ENCODE measurements at regions of chr7 and their contacts with region 1.

Region 1: GRCh38 chr7:92447345-92448204 is at the start of gene GATAD1:
- DNase-seq: peak; percentile 63 to 90 (median 79)
- ATAC-seq: peak; percentile 70 to 74
- H3K4me3 Mint-ChIP-seq: peak within 1 kb of the TSS; percentile 88 to 98 (median 92)
- H3K27ac Mint-ChIP-seq: peak within 1 kb of the TSS; percentile 95 to 99 (median 98)
- H3K4me1 Mint-ChIP-seq: peaks cover 12 to 16% (median 15%) of the 10 kb centered on the region in 4 donors
- H3K27me3 Mint-ChIP-seq: no peaks in the 10 kb centered on the region
- polyA plus RNA-seq, gene GATAD1: 8.2 to 10.9 (median 9.3) TPM

Region 2: GRCh38 chr7:91940572-91941341 is 506.8 kb before region 1 on chr7 and contains the start of gene AKAP9:
- POLR2A ChIA-PET with region 1: interaction called, 12 read pairs
- DNase-seq: peak; percentile 77 to 92 (median 87)
- ATAC-seq: peak; percentile 87 to 89
- H3K4me3 Mint-ChIP-seq: peak within 1 kb of the TSS; percentile 91 to 100 (median 96)
- H3K27ac Mint-ChIP-seq: peak within 1 kb of the TSS; percentile 90 to 100 (median 98)
- H3K4me1 Mint-ChIP-seq: peaks cover 16 to 54% (median 44%) of the 10 kb centered on the region in 4 donors
- H3K27me3 Mint-ChIP-seq: no peaks in the 10 kb centered on the region
- polyA plus RNA-seq, gene AKAP9: 11.1 to 40.8 (median 20.4) TPM

Region 3: DNA sequence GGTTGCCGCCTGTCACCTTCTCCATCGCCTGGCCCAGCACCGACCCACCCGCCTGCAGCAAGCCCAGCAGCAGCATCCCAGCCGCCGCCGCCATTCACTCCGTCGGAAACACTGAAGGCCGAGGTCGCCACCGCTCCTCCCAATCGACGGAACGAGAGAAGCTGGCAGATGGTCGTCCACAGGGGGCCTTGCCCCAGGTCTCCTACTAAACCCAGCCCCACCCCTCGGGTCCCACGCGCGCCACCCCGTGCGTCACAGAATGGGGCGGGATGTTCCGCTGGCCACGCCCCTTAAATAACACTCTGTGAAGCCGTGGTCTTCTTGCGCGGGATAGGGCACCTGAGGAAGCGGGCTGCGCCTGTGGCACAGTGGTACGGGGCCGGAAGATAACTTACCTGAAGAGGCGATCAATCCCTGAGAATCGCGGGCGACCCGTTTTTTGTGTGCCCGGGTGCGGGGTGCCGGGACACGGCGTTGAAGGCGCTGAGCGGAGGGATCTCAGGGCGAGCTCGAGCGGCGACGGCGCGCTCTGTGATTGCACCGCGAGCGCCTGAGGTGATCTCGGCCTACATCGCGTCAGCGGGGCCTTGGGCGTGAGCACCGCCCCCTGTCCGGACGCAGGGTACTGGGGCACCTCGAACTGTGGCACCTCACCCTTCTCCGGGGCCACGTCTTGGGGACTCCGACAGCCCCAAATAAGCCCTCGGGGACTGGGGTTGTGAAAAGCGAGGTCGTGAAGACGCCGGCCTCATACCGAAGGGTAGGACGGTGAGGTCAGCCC is 313.1 kb before region 1 on chr7 and contains the start of gene CYP51A1:
- POLR2A ChIA-PET with region 1: interaction called, 11 read pairs
- DNase-seq: peak; percentile 86 to 99 (median 96)
- ATAC-seq: peak; percentile 83 to 84
- H3K4me3 Mint-ChIP-seq: peak within 1 kb of the TSS; percentile 93 to 100 (median 98)
- H3K27ac Mint-ChIP-seq: peak within 1 kb of the TSS; percentile 99 to 100 (median 99)
- H3K4me1 Mint-ChIP-seq: peaks cover 9 to 34% (median 31%) of the 10 kb centered on the region in 4 donors
- H3K27me3 Mint-ChIP-seq: peaks cover 0 to 2% (median 0%) of the 10 kb centered on the region in 5 donors
- polyA plus RNA-seq, gene CYP51A1: 9.4 to 11.9 (median 11.0) TPM

Region 4: GRCh38 chr7:92245487-92246362 is 201.8 kb before region 1 on chr7 and contains the starts of genes ANKIB1 and KRIT1:
- POLR2A ChIA-PET with region 1: interaction called, 27 read pairs
- DNase-seq: peak; percentile 77 to 94 (median 85)
- ATAC-seq: peak; percentile 81 to 85
- H3K4me3 Mint-ChIP-seq: peak within 1 kb of the TSS; percentile 93 to 99 (median 98)
- H3K27ac Mint-ChIP-seq: peak within 1 kb of the TSS; percentile 98 to 100 (median 99)
- H3K4me1 Mint-ChIP-seq: peaks cover 20 to 59% (median 45%) of the 10 kb centered on the region in 4 donors
- H3K27me3 Mint-ChIP-seq: no peaks in the 10 kb centered on the region
- polyA plus RNA-seq, gene ANKIB1: 5.1 to 12.7 (median 9.8) TPM
- polyA plus RNA-seq, gene KRIT1: 11.2 to 20.1 (median 17.6) TPM

Region 5: GRCh38 chr7:92282930-92283329 is 164.6 kb before region 1 on chr7:
- POLR2A ChIA-PET with region 1: no interaction called
- DNase-seq: no peak
- ATAC-seq: no peak
- H3K4me3 Mint-ChIP-seq: no peak overlapping the region
- H3K27ac Mint-ChIP-seq: no peak overlapping the region
- H3K4me1 Mint-ChIP-seq: peaks cover 12 to 30% (median 12%) of the 10 kb centered on the region in 4 donors
- H3K27me3 Mint-ChIP-seq: no peaks in the 10 kb centered on the region

Region 6: GRCh38 chr7:92425321-92425947 is 22.1 kb before region 1 on chr7:
- POLR2A ChIA-PET with region 1: interaction called, 51 read pairs
- DNase-seq: no peak
- ATAC-seq: peak in 1 of 2 donors; percentile 37
- H3K4me3 Mint-ChIP-seq: peak overlapping the region in 5 of 10 donors; percentile 48 to 55 (median 50)
- H3K27ac Mint-ChIP-seq: no peak overlapping the region
- H3K4me1 Mint-ChIP-seq: peaks cover 6 to 13% (median 9%) of the 10 kb centered on the region in 4 donors
- H3K27me3 Mint-ChIP-seq: peaks cover 12 to 27% (median 21%) of the 10 kb centered on the region in 5 donors

Region 7: GRCh38 chr7:92528188-92528957 is 80.8 kb after region 1 on chr7 and contains the starts of genes PEX1 and RBM48:
- POLR2A ChIA-PET with region 1: interaction called, 27 read pairs
- DNase-seq: peak; percentile 88 to 98 (median 96)
- ATAC-seq: peak; percentile 88 to 90
- H3K4me3 Mint-ChIP-seq: peak within 1 kb of the TSS; percentile 81 to 96 (median 94)
- H3K27ac Mint-ChIP-seq: peak within 1 kb of the TSS; percentile 94 to 99 (median 98)
- H3K4me1 Mint-ChIP-seq: peaks cover 21 to 50% (median 36%) of the 10 kb centered on the region in 4 donors
- H3K27me3 Mint-ChIP-seq: no peaks in the 10 kb centered on the region
- polyA plus RNA-seq, gene PEX1: 7.9 to 10.1 (median 9.7) TPM
- polyA plus RNA-seq, gene RBM48: 25.6 to 28.9 (median 27.9) TPM

Region 8: DNA sequence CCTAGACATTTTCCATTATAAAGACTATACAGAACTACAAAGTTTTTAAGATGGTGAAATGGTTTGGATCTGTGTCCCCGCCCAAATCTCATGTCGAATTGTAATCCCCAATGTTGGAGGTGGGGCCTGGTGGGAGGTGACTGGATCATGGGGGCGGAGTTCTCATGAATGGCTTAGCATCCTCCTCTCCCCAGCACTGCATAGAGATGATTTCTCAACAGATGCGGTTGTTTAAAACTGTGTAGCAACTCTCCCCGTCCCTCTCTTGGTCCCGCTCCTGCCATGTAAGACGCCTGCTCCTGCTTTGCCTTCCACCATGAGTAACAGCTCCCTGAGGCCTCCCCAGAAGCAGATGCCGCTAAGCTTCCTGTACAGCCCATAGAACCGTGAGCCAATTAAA is 141.0 kb after region 1 on chr7:
- POLR2A ChIA-PET with region 1: interaction called, 12 read pairs
- DNase-seq: no peak
- ATAC-seq: no peak
- H3K4me3 Mint-ChIP-seq: peak overlapping the region; percentile 85 to 99 (median 96)
- H3K27ac Mint-ChIP-seq: peak overlapping the region; percentile 48 to 98 (median 90)
- H3K4me1 Mint-ChIP-seq: peaks cover 28 to 62% (median 56%) of the 10 kb centered on the region in 4 donors
- H3K27me3 Mint-ChIP-seq: peaks cover 0 to 4% (median 0%) of the 10 kb centered on the region in 5 donors